ENCODE measurements at regions of chr7 and their contacts with region 1.

Region 1: GRCh38 chr7:5557920-5558401 is 134.3 kb upstream of the TNRC18 start:
- DNase-seq: peak; percentile 33
- ATAC-seq: no peak
- H3K4me3 Mint-ChIP-seq: peak overlapping the region; percentile 66
- H3K27ac Mint-ChIP-seq: peak overlapping the region; percentile 86
- H3K4me1 Mint-ChIP-seq: peaks cover 44% of the 10 kb centered on the region
- H3K27me3 Mint-ChIP-seq: no peaks in the 10 kb centered on the region
- CTCF ChIP-seq: no peak

Region 2: GRCh38 chr7:5462216-5462615 is 95.7 kb before region 1 on chr7:
- CTCF ChIA-PET with region 1: no interaction called
- POLR2A ChIA-PET with region 1: no interaction called
- intact Hi-C with region 1: no loop called
- DNase-seq: peak; percentile 32
- ATAC-seq: peak; percentile 61
- H3K4me3 Mint-ChIP-seq: peak overlapping the region; percentile 7
- H3K27ac Mint-ChIP-seq: no peak overlapping the region
- H3K4me1 Mint-ChIP-seq: peaks cover 5% of the 10 kb centered on the region
- H3K27me3 Mint-ChIP-seq: no peaks in the 10 kb centered on the region
- CTCF ChIP-seq: no peak

Region 3: DNA sequence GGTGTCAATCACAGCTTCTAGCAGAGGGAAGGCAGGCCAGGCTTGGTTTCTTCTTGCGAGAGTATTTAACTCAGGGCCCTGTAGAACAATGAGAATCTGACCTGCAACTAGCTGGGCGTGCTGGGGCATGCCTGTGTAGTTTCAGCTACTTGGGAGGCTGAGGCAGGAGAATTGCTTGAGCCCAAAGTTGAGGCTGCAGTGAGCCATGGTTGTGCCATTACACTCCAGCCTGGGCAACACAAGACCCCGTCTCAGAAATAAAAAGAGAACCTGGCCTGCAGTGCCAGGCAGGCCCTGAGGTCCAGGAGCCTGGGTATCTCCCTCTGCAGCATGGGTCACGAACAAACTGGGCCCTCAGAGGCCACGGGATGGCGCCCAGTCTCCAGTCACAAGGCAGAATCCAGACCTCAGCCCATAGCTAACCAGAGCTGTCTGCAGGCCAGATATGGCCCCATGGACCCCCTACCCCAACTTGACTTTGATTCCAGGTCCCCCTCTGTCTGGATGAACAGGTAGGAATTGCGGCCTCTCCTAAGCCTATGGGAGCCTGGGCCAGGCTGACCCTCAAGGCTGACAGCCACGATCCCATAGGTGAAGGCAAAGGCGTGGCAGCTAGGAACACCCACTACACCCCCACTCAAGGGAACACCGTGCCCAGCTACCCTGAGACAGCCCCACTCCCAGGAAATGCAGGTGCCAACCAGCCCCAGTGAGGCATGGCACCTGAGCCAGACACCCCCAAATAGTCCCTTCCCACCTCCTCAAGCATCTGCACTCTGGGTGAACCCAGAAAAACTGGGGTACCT is 31.7 kb before region 1 on chr7:
- CTCF ChIA-PET with region 1: interaction called, 29 read pairs
- POLR2A ChIA-PET with region 1: no interaction called
- intact Hi-C with region 1: no loop called
- DNase-seq: peak; percentile 62
- ATAC-seq: peak; percentile 2
- H3K4me3 Mint-ChIP-seq: peak overlapping the region; percentile 96
- H3K27ac Mint-ChIP-seq: peak overlapping the region; percentile 96
- H3K4me1 Mint-ChIP-seq: peaks cover 26% of the 10 kb centered on the region
- H3K27me3 Mint-ChIP-seq: no peaks in the 10 kb centered on the region
- CTCF ChIP-seq: no peak

Region 4: DNA sequence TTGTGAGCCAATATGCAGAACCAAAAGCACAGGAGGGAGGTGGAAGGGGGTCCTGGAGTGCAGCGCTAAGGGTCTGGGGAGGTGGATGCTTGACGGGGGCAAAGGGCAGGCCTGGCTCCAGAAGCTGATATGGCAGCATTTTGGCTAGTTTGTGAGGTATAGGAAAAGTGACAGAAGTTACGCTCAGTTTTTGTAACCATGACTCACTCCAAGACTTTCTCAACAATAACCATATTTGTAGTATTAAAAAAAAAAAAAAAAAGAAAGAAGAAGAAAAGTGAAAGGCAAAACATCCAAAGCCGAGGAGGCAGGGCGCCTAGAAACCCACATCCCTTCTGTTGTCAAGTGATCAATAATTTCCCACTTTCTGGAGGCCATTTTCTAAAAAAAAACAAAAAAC is 131.2 kb after region 1 on chr7:
- CTCF ChIA-PET with region 1: interaction called, 10 read pairs
- POLR2A ChIA-PET with region 1: interaction called, 3 read pairs
- intact Hi-C with region 1: no loop called
- DNase-seq: peak; percentile 87
- ATAC-seq: peak; percentile 65
- H3K4me3 Mint-ChIP-seq: peak overlapping the region; percentile 57
- H3K27ac Mint-ChIP-seq: peak overlapping the region; percentile 97
- H3K4me1 Mint-ChIP-seq: peaks cover 93% of the 10 kb centered on the region
- H3K27me3 Mint-ChIP-seq: no peaks in the 10 kb centered on the region
- CTCF ChIP-seq: no peak

Region 5: GRCh38 chr7:5694912-5695726 is 137.2 kb after region 1 on chr7:
- CTCF ChIA-PET with region 1: interaction called, 16 read pairs
- POLR2A ChIA-PET with region 1: interaction called, 6 read pairs
- intact Hi-C with region 1: no loop called
- DNase-seq: peak; percentile 87
- ATAC-seq: peak; percentile 75
- H3K4me3 Mint-ChIP-seq: peak overlapping the region; percentile 86
- H3K27ac Mint-ChIP-seq: peak overlapping the region; percentile 95
- H3K4me1 Mint-ChIP-seq: peaks cover 98% of the 10 kb centered on the region
- H3K27me3 Mint-ChIP-seq: no peaks in the 10 kb centered on the region
- CTCF ChIP-seq: no peak